MCF 10A (cell line): ENCODE measurements at regions of chr17 and their contacts with region 1.

Region 1: GRCh38 chr17:3647769-3648555 is 11.4 kb downstream of the CTNS start:
- DNase-seq: peak; percentile 58
- H3K4me3 Mint-ChIP-seq: no peak overlapping the region
- H3K27ac Mint-ChIP-seq: no peak overlapping the region
- H3K4me1 Mint-ChIP-seq: no peaks in the 10 kb centered on the region
- H3K27me3 Mint-ChIP-seq: no peaks in the 10 kb centered on the region
- CTCF ChIP-seq: peak; percentile 56

Region 2: GRCh38 chr17:2828397-2829038 is 819.4 kb before region 1 on chr17:
- CTCF ChIA-PET with region 1: interaction called, 12 read pairs
- POLR2A ChIA-PET with region 1: no interaction called
- intact Hi-C with region 1: loop called (anchors 5 kb)
- DNase-seq: peak; percentile 69
- H3K4me3 Mint-ChIP-seq: no peak overlapping the region
- H3K27ac Mint-ChIP-seq: no peak overlapping the region
- H3K4me1 Mint-ChIP-seq: no peaks in the 10 kb centered on the region
- H3K27me3 Mint-ChIP-seq: no peaks in the 10 kb centered on the region
- CTCF ChIP-seq: peak; percentile 97

Region 3: GRCh38 chr17:3048767-3049471 is 599.0 kb before region 1 on chr17:
- CTCF ChIA-PET with region 1: interaction called, 18 read pairs
- POLR2A ChIA-PET with region 1: interaction called, 6 read pairs
- intact Hi-C with region 1: no loop called
- DNase-seq: peak; percentile 98
- H3K4me3 Mint-ChIP-seq: peak overlapping the region; percentile 96
- H3K27ac Mint-ChIP-seq: peak overlapping the region; percentile 86
- H3K4me1 Mint-ChIP-seq: peaks cover 5% of the 10 kb centered on the region
- H3K27me3 Mint-ChIP-seq: no peaks in the 10 kb centered on the region
- CTCF ChIP-seq: peak; percentile 86

Region 4: DNA sequence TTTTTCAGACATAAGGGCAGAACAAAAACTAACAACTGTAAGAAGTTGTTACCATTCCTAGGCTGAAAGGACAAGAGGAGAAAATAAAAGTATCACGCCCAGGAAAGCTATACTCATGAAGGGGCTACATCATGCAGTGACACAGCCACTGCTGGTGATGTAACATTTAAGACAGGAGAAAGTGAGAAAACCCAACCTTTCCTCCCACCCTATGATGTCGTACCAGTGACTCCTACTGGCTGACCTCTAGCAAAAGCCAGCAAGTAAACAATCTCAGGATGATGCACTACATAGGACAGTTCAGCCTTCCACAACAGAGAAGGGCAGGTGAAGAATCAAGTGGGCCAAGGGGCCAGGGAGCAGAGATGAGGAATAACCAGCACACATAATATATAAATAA is 200.3 kb before region 1 on chr17:
- CTCF ChIA-PET with region 1: no interaction called
- POLR2A ChIA-PET with region 1: no interaction called
- intact Hi-C with region 1: no loop called
- DNase-seq: peak; percentile 25
- H3K4me3 Mint-ChIP-seq: no peak overlapping the region
- H3K27ac Mint-ChIP-seq: no peak overlapping the region
- H3K4me1 Mint-ChIP-seq: no peaks in the 10 kb centered on the region
- H3K27me3 Mint-ChIP-seq: peaks cover 19% of the 10 kb centered on the region
- CTCF ChIP-seq: no peak

Region 5: DNA sequence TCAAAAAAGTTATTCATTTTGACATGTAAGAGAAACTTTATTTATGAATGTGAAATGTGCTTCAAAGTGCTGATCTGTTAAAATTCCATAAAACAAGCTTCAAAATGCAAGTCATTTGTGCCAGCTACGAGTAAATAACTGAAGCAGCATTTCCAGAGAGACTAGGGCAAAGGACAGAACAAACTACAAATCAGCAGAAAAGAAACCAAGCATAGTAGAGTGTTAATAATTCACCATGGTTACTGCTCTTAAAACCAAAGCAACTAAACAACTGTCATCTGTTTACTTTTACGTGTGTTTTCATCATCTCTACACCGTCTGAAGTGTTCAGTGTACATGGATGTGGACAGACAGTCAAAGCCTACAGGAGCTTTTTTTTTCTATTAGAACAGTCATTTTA is 173.8 kb before region 1 on chr17:
- CTCF ChIA-PET with region 1: interaction called, 15 read pairs
- POLR2A ChIA-PET with region 1: no interaction called
- intact Hi-C with region 1: no loop called
- DNase-seq: no peak
- H3K4me3 Mint-ChIP-seq: no peak overlapping the region
- H3K27ac Mint-ChIP-seq: no peak overlapping the region
- H3K4me1 Mint-ChIP-seq: peaks cover 14% of the 10 kb centered on the region
- H3K27me3 Mint-ChIP-seq: peaks cover 3% of the 10 kb centered on the region
- CTCF ChIP-seq: no peak

Region 6: DNA sequence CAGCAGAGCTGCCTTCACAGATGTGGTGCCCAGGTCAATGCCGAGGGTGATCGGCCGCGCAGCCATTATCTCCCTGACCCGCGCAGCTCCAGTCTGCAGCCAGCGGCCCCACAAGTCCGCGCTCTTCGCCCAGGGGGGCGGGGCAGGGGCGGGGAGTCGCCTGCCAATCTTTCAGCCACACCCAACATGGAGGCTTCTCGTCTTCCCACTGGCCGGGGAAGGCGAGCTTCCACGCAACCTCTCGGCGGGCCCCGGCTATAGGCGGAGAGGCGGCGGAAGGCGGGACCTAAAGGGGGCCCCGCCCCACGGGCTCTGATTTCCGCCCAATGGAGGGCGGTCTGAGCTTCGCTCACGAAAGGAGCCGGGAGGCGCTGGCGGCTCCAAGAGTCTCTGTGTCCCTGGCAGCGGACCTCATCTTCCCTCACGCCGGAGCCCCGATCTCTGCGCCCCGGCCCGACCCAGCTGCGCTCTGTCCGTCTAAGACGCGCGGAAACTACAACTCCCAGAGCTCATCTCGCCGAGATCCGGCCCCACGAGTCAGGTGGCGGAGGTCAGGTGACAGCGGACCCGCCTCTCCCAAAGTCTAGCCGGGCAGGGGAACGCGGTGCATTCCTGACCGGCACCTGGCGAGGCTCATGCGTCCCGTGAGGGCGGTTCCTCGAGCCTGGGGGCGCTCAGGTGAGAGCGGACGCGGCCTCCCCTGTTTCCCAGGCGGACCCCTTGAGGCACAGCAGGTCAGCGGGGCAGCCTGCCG is 11.6 kb before region 1 on chr17 and contains the starts of genes CTNS and SHPK:
- CTCF ChIA-PET with region 1: interaction called, 12 read pairs
- POLR2A ChIA-PET with region 1: interaction called, 9 read pairs
- intact Hi-C with region 1: no loop called
- DNase-seq: peak; percentile 98
- H3K4me3 Mint-ChIP-seq: peak within 1 kb of the TSS; percentile 93
- H3K27ac Mint-ChIP-seq: peak within 1 kb of the TSS; percentile 100
- H3K4me1 Mint-ChIP-seq: peaks cover 17% of the 10 kb centered on the region
- H3K27me3 Mint-ChIP-seq: no peaks in the 10 kb centered on the region
- CTCF ChIP-seq: no peak
- total RNA-seq, gene CTNS: 7.1 and 11.4 TPM in 2 replicates
- total RNA-seq, gene SHPK: 6.3 and 8.3 TPM in 2 replicates